Activated B cell treated with CpG ODN at 0.5 μM for 24 hours (primary cell): ENCODE measurements at regions of chr6 and their contacts with region 1.

Region 1: DNA sequence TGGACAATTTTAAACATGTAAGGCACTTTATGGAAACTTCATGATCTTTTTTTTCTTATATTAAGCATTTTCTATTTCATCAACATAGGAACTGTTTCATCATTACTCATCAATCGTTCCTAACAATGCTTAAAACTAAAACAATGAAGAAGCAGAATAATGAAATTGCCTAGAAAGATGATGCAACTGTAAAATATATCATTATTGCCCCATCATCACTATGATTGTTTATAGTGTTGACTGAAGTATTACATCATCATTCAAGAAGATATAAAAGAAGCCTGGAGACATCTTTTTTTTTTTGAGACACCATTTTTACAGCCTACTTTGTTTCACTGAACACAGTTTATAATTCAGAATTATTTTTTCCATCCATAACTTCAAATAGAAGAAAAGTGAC is 147.2 kb downstream of the TRDN start:
- DNase-seq: no peak
- ATAC-seq: no peak
- H3K4me3 Mint-ChIP-seq: no peak overlapping the region
- H3K27ac Mint-ChIP-seq: no peak overlapping the region
- H3K4me1 Mint-ChIP-seq: no peaks in the 10 kb centered on the region
- H3K27me3 Mint-ChIP-seq: no peaks in the 10 kb centered on the region
- CTCF ChIP-seq: no peak

Region 2: DNA sequence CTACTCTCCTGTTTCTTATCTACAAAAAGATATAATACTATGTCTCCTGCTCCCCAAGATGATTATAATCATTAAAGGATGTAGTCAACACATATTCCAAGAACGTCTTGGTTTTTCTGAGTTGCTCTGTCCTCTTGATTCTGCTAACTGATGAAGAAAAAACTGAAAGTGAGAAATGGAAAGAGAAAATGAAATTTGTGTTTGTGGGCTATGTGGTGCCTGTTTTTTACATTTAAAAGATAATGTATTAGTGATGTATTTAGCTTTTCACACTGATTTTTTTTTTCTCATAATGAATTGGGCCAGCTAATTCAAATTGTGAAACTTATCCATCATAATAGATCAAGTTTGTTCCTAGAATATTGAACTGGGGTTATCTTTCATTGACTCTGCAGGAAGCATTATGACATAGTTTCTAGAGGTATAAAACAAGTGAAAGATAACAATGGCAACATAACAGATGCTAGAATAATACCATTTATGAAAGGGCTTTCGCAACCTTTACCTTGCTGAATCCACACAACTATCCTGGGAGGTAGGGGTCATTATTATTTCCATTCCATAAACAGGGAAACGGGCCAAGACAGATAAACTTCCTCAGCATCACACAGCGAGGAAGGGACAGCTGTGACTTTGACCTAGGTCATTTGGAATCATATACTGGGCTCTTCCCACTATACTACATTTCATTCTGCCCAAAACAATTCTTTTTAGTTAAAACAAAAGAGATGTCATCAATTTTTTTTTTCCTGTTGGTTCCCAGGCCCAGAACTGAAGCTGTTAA is 1717.5 kb before region 1 on chr6:
- CTCF ChIA-PET with region 1: no interaction called
- POLR2A ChIA-PET with region 1: no interaction called
- intact Hi-C with region 1: loop called (anchors 5 kb)
- DNase-seq: no peak
- ATAC-seq: no peak
- H3K4me3 Mint-ChIP-seq: no peak overlapping the region
- H3K27ac Mint-ChIP-seq: no peak overlapping the region
- H3K4me1 Mint-ChIP-seq: no peaks in the 10 kb centered on the region
- H3K27me3 Mint-ChIP-seq: no peaks in the 10 kb centered on the region
- CTCF ChIP-seq: no peak